Esophagus squamous epithelium (tissue), 5 donors: ENCODE measurements at regions of chr17 and their contacts with region 1.

Region 1: DNA sequence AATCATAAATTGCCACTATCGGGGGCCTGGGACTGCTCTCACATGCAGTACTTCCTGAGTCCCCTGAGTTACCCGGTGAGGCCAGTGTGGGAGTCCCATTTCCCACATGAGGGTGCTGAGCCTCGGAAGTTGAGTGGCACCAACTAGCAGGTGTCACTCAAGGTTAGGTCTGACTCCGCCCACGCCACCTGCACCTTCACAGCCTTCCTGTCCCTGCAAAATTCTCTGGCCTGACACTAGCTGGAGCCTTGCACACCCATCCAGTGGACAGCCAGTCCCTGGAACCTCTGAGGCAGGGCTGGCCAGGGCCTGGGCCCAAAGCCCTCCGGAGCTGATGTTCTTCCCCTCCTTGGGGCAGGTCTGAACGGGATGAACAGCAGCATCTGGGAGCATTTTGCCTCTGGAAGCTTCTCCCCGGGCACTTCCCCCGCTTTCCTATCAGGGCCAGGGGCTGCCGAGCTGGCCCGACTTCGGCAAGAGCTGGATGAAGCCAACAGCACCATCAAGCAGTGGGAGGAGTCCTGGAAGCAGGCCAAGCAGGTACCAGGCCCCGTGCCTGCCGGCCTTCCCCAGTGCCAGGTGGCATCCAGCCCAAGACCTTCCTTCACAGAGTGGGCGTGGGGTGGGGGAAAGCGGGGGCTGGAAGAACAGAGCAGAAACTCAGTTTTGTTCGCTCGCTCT is 21.9 kb downstream of the UNC13D start:
- DNase-seq: no peak
- H3K4me3 ChIP-seq: no peak overlapping the region
- H3K27ac ChIP-seq: no peak overlapping the region
- H3K4me1 ChIP-seq: peaks cover 5 to 33% (median 7%) of the 10 kb centered on the region in 3 donors
- H3K27me3 ChIP-seq: no peaks in the 10 kb centered on the region
- CTCF ChIP-seq: no peak
- POLR2A ChIP-seq: no peak

Region 2: GRCh38 chr17:75774991-75775668 is 47.1 kb before region 1 on chr17:
- intact Hi-C with region 1: loop called (anchors 5 kb)
- DNase-seq: no peak
- H3K4me3 ChIP-seq: no peak overlapping the region
- H3K27ac ChIP-seq: peak overlapping the region; percentile 10 to 99 (median 68)
- H3K4me1 ChIP-seq: peaks cover 17 to 41% (median 19%) of the 10 kb centered on the region in 3 donors
- H3K27me3 ChIP-seq: no peaks in the 10 kb centered on the region
- CTCF ChIP-seq: no peak
- POLR2A ChIP-seq: no peak

Region 3: GRCh38 chr17:76219670-76220383 is 397.6 kb after region 1 on chr17:
- intact Hi-C with region 1: no loop called
- DNase-seq: no peak
- H3K4me3 ChIP-seq: no peak overlapping the region
- H3K27ac ChIP-seq: no peak overlapping the region
- H3K4me1 ChIP-seq: no peaks in the 10 kb centered on the region
- H3K27me3 ChIP-seq: no peaks in the 10 kb centered on the region
- CTCF ChIP-seq: no peak
- POLR2A ChIP-seq: no peak